Ovary (tissue), 10 donors: ENCODE measurements at regions of chr5 and their contacts with region 1.

Region 1: GRCh38 chr5:52531105-52531504 is 256.6 kb upstream of the ITGA1 start:
- DNase-seq: no peak
- H3K4me3 ChIP-seq: no peak overlapping the region
- H3K27ac ChIP-seq: no peak overlapping the region
- H3K4me1 ChIP-seq: no peaks in the 10 kb centered on the region
- H3K27me3 ChIP-seq: no peaks in the 10 kb centered on the region
- CTCF ChIP-seq: no peak
- EP300 ChIP-seq: no peak
- POLR2A ChIP-seq: no peak

Region 2: DNA sequence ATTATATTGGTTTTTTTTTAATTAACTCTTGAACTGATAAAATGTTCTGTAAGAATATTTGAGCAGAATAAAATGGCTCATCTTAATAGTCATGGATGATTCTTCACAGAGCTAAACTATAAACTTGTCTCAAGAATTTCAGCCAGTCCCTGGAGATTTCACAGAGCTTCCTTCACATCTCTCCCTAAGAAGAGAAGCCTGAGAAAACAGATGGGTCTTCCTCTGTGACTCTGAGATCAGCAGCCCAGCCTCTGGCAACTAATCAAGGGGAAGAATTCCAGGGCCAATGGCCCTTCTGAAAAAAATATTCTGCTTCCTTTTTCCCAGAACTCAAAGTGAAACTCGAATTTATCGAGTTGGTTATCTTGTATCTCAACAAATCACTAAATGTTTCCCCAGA is 134.5 kb after region 1 on chr5:
- intact Hi-C with region 1: no loop called
- DNase-seq: no peak
- H3K4me3 ChIP-seq: no peak overlapping the region
- H3K27ac ChIP-seq: no peak overlapping the region
- H3K4me1 ChIP-seq: no peaks in the 10 kb centered on the region
- H3K27me3 ChIP-seq: no peaks in the 10 kb centered on the region
- CTCF ChIP-seq: no peak
- EP300 ChIP-seq: no peak
- POLR2A ChIP-seq: no peak

Region 3: DNA sequence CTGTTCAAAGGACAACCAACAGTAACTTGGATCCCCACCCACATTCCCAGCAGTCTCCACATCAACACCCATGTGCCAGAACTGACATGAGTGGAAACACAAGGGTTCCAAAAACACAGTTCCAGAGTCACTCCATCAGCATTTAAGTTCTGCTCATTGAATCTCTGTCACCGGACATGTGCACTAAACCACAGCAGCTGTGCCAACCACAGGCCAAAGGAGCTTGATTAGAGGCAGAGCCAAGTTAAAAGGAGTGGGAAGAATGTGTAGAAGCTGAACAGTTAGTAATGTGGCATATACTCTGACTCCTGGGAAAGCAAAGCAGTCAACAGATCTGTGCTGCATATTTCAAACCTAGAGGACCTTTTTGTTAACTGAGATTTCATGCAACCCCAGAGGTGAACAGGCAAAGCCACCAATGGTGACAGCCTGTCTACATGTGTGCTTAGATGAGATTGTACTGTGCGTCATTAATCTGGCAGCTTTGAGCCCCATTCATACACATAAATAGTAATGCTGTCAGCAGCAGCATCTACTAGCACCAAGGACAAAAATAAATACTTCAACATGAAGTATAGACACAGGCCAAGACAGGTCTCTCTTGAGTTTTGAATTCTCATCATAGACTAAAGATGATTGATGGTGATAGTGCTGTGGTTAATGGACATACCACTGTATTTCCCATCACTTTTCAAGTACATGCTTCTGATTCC is 933.0 kb after region 1 on chr5:
- intact Hi-C with region 1: loop called in 1 of 4 experiments (anchors 5 kb)
- DNase-seq: no peak
- H3K4me3 ChIP-seq: no peak overlapping the region
- H3K27ac ChIP-seq: no peak overlapping the region
- H3K4me1 ChIP-seq: no peaks in the 10 kb centered on the region
- H3K27me3 ChIP-seq: no peaks in the 10 kb centered on the region
- CTCF ChIP-seq: no peak
- EP300 ChIP-seq: no peak
- POLR2A ChIP-seq: no peak